Activated CD4-positive, alpha-beta T cell treated with anti-CD3 and anti-CD28 coated beads for 36 hours (primary cell): ENCODE measurements at regions of chr11 and their contacts with region 1.

Region 1: GRCh38 chr11:95705485-95706124 is 84.0 kb downstream of the FAM76B start:
- DNase-seq: peak; percentile 92
- ATAC-seq: peak; percentile 83
- H3K4me3 Mint-ChIP-seq: no peak overlapping the region
- H3K27ac Mint-ChIP-seq: no peak overlapping the region
- H3K4me1 Mint-ChIP-seq: peaks cover 12% of the 10 kb centered on the region
- H3K27me3 Mint-ChIP-seq: no peaks in the 10 kb centered on the region

Region 2: DNA sequence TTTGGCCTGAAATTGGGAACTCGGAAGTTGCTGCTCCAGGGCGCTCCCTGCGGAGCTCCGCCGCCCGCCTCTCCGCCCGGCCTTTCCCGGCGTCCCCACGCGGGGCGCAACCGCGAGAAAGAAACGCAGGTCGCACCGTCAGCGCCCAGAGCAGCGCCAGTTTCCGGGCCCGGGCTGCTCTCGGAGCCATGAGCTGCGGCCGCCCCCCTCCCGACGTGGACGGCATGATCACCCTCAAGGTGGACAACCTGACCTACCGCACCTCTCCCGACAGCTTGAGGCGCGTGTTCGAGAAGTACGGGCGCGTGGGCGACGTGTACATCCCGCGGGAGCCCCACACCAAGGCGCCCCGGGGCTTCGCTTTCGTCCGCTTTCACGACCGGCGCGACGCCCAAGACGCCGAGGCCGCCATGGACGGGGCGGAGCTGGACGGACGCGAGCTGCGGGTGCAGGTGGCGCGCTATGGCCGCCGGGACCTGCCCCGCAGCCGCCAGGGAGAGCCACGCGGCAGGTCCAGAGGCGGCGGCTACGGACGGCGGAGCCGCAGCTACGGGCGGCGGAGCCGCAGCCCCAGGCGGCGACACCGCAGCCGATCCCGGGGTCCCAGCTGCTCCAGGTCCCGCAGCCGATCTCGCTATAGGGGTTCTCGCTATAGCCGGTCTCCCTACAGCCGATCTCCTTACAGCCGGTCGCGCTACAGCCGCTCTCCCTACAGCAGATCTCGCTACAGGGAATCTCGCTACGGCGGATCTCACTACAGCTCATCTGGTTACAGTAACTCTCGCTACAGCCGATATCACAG is 638.4 kb before region 1 on chr11:
- CTCF ChIA-PET with region 1: interaction called, 8 read pairs
- POLR2A ChIA-PET with region 1: no interaction called
- intact Hi-C with region 1: loop called (anchors 1 to 5 kb)
- DNase-seq: peak; percentile 87
- ATAC-seq: peak; percentile 68
- H3K4me3 Mint-ChIP-seq: peak overlapping the region; percentile 97
- H3K27ac Mint-ChIP-seq: peak overlapping the region; percentile 92
- H3K4me1 Mint-ChIP-seq: peaks cover 25% of the 10 kb centered on the region
- H3K27me3 Mint-ChIP-seq: peaks cover 2% of the 10 kb centered on the region

Region 3: GRCh38 chr11:95345651-95346050 is 360.0 kb before region 1 on chr11:
- CTCF ChIA-PET with region 1: interaction called, 5 read pairs
- POLR2A ChIA-PET with region 1: no interaction called
- intact Hi-C with region 1: loop called in 1 of 2 experiments (anchors 10 kb)
- DNase-seq: no peak
- ATAC-seq: peak; percentile 88
- H3K4me3 Mint-ChIP-seq: no peak overlapping the region
- H3K27ac Mint-ChIP-seq: no peak overlapping the region
- H3K4me1 Mint-ChIP-seq: peaks cover 17% of the 10 kb centered on the region
- H3K27me3 Mint-ChIP-seq: no peaks in the 10 kb centered on the region

Region 4: DNA sequence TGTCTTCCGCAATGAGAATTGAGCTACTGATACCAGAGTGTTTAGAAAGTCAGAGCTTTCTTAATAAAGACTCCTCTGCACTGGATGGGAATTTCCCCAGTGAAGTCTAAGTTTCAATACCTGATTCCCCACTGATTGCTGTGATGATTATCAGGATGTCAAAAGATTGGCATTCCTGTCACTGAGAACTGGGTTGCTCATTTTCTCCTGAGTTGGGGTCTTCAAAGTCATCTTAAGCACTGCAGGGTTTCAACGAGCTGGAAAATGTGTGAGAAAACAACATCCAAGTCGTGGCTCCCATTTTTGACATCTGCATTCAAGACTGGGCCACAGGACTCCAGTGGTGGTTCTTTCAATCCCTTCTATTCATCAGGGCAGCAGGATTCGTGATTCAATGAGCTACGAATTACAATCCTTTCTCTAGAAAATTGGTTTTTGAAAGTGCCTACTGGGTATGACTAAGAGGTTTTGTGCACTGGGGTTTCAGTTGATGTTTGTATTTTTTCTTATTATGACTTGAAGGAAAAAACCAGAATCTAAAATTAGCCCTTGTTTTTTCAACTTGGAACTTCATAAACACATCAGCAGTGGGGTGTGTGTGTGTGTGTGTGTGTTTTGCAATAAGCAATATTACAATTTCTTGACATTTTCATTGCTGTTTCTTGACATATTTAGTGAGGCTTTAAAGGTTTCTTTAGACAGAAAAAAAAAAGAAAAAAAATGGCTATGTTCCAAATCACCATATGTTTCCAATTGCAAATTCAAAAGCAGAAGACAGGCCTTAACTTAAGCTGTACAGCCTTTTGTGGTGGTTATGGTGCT is 149.1 kb before region 1 on chr11:
- CTCF ChIA-PET with region 1: interaction called, 22 read pairs
- POLR2A ChIA-PET with region 1: no interaction called
- intact Hi-C with region 1: loop called (anchors 1 kb)
- DNase-seq: peak; percentile 60
- ATAC-seq: peak; percentile 94
- H3K4me3 Mint-ChIP-seq: peak overlapping the region; percentile 17
- H3K27ac Mint-ChIP-seq: peak overlapping the region; percentile 90
- H3K4me1 Mint-ChIP-seq: peaks cover 23% of the 10 kb centered on the region
- H3K27me3 Mint-ChIP-seq: no peaks in the 10 kb centered on the region

Region 5: DNA sequence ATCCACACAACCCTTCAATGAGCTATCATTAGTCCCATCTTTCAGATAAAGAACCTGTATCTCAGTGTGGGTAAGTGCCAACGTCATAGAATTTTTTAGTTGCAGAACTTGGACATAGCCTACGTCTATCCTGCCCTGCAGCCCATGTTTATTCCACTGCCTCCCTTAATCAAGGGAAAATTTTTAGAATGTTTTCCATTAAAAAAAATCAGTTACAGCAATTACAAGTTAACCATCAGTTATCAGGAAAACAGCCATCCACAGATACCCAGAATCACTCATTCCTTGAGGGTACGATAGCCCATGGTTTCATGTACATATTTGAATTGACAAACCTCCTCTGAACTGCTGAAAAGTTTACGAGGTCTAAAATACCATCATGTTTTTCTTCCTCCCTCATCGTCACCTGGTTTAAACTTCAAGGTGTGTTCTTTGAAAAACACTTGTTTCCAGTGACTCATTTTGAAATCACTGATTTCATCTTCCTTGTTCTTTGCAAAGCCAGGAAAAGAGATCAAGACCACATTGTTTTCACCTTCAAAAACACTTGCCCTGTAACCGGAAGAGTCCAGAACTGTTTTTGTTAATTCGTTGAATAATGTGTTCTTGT is 16.9 kb before region 1 on chr11:
- CTCF ChIA-PET with region 1: interaction called, 41 read pairs
- POLR2A ChIA-PET with region 1: no interaction called
- intact Hi-C with region 1: loop called in 1 of 2 experiments (anchors 2 kb)
- DNase-seq: no peak
- ATAC-seq: peak; percentile 77
- H3K4me3 Mint-ChIP-seq: peak overlapping the region; percentile 9
- H3K27ac Mint-ChIP-seq: no peak overlapping the region
- H3K4me1 Mint-ChIP-seq: peaks cover 24% of the 10 kb centered on the region
- H3K27me3 Mint-ChIP-seq: no peaks in the 10 kb centered on the region

Region 6: GRCh38 chr11:95732930-95733602 is 27.5 kb after region 1 on chr11:
- CTCF ChIA-PET with region 1: no interaction called
- POLR2A ChIA-PET with region 1: no interaction called
- intact Hi-C with region 1: no loop called
- DNase-seq: no peak
- ATAC-seq: no peak
- H3K4me3 Mint-ChIP-seq: no peak overlapping the region
- H3K27ac Mint-ChIP-seq: no peak overlapping the region
- H3K4me1 Mint-ChIP-seq: peaks cover 7% of the 10 kb centered on the region
- H3K27me3 Mint-ChIP-seq: peaks cover 3% of the 10 kb centered on the region

Region 7: GRCh38 chr11:96424693-96425092 is 719.1 kb after region 1 on chr11:
- CTCF ChIA-PET with region 1: interaction called, 3 read pairs
- POLR2A ChIA-PET with region 1: no interaction called
- intact Hi-C with region 1: loop called in 1 of 2 experiments (anchors 5 kb)
- DNase-seq: no peak
- ATAC-seq: peak; percentile 80
- H3K4me3 Mint-ChIP-seq: no peak overlapping the region
- H3K27ac Mint-ChIP-seq: no peak overlapping the region
- H3K4me1 Mint-ChIP-seq: peaks cover 14% of the 10 kb centered on the region
- H3K27me3 Mint-ChIP-seq: peaks cover 28% of the 10 kb centered on the region